AG04449 (cell line): ENCODE measurements at regions of chr7 and their contacts with region 1.

Region 1: DNA sequence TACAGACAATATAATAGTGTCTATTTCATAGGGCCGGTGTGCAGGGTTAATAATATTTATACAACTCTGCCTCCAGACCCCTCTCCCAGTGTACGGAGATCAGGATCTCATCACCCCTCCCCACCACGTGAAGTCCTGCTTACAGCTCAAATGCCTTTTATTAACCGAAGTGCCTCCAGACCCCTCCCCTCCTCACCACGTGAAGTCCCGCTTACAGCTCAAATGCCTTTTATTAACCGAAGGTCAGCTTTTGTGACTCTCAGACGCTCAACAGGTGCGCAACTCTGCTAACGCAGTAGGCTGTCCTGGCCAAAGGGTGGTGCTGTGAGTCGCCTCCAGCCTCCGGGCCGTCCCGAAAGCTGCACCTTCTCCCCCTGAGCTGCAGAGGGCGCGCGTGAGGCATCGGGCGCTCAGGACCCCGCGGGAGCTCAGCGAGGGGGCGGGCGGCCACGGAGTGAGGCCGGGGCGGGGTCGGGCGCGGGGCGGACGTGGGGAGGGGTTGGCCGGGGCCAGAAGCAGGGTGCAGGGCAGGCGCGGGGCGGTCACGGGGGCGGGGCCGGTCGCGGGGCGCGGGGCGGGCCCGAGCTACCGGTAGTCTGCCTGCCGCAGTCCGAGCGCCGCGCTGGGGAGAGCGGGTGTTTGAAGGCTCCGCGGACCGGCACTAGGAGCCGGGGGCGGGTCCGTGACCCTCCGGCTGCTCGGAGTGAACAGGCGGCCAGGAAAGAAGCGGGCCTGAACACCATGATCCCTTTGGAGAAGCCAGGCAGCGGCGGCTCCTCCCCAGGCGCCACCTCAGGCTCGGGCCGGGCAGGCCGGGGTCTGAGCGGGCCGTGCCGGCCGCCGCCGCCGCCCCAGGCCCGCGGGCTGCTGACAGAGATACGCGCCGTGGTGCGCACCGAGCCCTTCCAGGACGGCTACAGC is at the start of gene STK17A:
- DNase-seq: no peak
- H3K4me3 ChIP-seq: peak within 1 kb of the TSS; percentile 85
- CTCF ChIP-seq: peak; percentile 100

Region 2: DNA sequence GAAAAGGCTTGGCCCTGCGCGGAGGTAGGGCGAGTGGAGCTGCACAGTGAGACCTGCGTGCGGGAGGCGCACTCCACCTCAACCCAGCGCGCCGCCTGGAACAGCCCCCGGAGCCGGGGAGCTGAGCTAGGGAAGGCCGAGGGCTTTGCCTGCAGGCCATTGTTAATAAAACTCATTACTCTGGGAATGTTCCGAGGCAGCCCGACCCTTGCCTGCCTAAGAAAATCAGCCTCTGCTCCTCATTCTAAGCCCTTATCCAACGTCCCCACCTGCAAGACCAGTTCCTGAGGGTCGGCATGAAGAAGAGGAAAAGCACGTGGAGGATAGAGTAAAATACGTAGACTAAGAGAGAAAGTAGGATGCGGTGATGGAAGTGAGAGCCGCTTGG is 726.2 kb before region 1 on chr7:
- CTCF ChIA-PET with region 1: no interaction called
- POLR2A ChIA-PET with region 1: no interaction called
- DNase-seq: no peak
- H3K4me3 ChIP-seq: peak overlapping the region; percentile 58
- CTCF ChIP-seq: no peak

Region 3: DNA sequence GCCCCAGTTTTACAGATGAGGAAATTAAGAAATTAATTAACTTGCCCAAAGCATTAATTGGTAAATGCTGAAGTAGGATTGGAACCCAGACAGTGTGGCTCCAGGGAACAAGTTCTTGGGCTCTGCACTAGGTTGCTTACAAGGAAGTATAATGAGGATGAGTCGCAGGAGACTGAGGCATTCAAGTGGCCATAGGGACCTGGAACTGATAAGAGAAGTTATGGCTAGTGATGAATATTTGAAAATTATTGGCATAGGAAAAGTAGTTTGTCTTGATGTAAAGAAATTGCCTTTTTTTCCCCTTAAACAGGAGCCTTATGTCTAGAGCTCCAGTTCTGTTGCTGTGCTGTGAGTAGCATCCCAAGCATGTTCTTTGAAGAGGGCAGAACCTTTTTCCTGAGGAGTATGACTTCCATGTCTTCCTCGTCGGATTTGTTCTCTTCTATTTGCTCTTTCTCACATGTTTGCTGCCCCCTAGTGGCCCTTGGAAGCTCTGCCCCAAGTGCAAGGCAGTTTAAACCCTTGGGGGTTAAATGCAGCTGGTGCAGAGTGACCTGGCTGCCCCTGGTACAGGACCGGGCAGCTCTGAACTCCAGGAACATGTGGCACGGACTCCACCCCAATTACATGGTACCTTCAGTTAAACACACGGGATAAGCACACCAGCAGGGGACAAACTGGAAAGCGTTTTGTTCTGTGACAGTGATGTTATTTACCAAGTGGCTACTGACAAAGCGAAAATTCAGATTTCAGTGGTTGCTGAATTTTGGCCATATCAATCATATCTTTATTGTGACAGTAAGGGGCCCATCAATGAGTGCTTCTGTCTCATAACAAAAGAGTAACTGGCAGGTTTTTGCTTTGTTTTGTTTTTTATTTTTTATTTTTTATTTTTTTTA is 321.5 kb before region 1 on chr7:
- CTCF ChIA-PET with region 1: no interaction called
- POLR2A ChIA-PET with region 1: no interaction called
- DNase-seq: peak; percentile 53
- H3K4me3 ChIP-seq: no peak overlapping the region
- CTCF ChIP-seq: peak; percentile 79

Region 4: DNA sequence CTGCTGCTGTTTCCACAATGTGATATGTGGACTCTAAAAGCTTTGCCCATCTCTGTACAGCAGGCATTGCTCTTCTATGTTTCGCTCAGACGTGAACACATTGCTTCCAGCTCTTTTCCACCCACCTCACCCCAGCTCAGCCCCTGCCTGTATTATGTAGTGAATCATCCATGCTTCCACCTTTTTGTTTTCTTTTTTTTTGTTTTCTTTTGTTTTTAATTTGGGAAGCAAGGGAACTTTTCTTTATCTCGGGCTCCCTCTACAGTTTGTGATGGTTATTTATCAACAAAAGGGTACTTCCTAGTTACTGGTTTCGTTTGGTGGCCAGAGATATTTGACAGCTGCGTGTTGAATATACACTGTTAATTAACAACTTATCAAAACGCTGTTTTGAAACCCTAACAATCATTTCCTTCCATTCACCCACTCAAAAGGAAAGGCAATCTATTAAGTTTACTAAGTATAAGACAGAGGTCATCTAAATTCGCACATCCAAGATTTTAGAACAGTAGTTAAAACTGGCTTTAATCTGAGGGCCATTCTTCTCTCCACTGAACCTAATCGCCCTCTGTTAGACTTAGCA is 127.7 kb before region 1 on chr7:
- CTCF ChIA-PET with region 1: interaction called, 10 read pairs
- POLR2A ChIA-PET with region 1: interaction called, 3 read pairs
- DNase-seq: peak; percentile 3
- H3K4me3 ChIP-seq: no peak overlapping the region
- CTCF ChIP-seq: peak; percentile 29

Region 5: GRCh38 chr7:43479042-43479441 is 103.7 kb before region 1 on chr7:
- CTCF ChIA-PET with region 1: no interaction called
- POLR2A ChIA-PET with region 1: no interaction called
- DNase-seq: no peak
- H3K4me3 ChIP-seq: no peak overlapping the region
- CTCF ChIP-seq: no peak

Region 6: DNA sequence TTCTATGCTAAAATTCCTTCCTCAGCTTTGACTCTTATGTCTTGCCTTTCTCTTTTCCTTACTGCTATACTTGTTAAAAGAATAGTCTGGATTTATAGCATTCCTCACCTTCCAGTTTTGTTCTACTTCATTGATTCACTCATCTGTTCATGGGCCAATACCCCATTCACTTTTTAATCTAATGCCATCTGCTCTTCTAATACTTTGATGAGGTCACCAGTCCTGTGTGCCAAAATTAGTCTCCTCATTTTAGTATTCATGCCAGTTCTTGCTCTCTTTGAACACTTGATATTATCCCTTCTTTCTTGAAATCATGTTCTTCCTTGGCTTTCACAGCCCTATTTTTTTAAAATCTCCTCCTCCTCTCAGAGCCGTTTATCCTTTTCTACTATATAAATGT is 19.5 kb after region 1 on chr7:
- CTCF ChIA-PET with region 1: interaction called, 12 read pairs
- POLR2A ChIA-PET with region 1: interaction called, 5 read pairs
- DNase-seq: no peak
- H3K4me3 ChIP-seq: no peak overlapping the region
- CTCF ChIP-seq: no peak

Region 7: GRCh38 chr7:43631559-43631958 is 48.8 kb after region 1 on chr7:
- CTCF ChIA-PET with region 1: interaction called, 10 read pairs
- POLR2A ChIA-PET with region 1: interaction called, 3 read pairs
- DNase-seq: no peak
- H3K4me3 ChIP-seq: no peak overlapping the region
- CTCF ChIP-seq: no peak

Region 8: GRCh38 chr7:43666938-43667337 is 84.2 kb after region 1 on chr7:
- CTCF ChIA-PET with region 1: interaction called, 23 read pairs
- POLR2A ChIA-PET with region 1: interaction called, 3 read pairs
- DNase-seq: no peak
- H3K4me3 ChIP-seq: no peak overlapping the region
- CTCF ChIP-seq: no peak

Region 9: DNA sequence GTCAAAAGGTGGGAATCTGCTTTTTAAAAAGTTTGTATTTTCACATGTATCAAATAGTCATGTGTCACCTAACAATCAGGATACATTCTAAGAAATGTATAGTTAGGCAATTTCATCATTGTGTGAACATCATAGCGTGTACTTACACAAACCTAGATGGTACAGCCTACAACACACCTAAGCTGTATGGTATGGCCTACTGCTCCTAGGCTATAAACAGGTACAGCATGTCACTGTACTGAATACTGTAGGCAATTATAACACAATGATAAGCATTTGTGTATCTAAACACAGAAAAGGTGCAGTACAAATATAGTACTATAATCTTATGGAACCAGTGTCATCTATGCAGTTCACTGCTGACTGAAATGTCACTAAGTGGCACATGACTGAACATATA is 128.7 kb after region 1 on chr7:
- CTCF ChIA-PET with region 1: interaction called, 198 read pairs
- POLR2A ChIA-PET with region 1: no interaction called
- DNase-seq: no peak
- H3K4me3 ChIP-seq: no peak overlapping the region
- CTCF ChIP-seq: no peak

Region 10: DNA sequence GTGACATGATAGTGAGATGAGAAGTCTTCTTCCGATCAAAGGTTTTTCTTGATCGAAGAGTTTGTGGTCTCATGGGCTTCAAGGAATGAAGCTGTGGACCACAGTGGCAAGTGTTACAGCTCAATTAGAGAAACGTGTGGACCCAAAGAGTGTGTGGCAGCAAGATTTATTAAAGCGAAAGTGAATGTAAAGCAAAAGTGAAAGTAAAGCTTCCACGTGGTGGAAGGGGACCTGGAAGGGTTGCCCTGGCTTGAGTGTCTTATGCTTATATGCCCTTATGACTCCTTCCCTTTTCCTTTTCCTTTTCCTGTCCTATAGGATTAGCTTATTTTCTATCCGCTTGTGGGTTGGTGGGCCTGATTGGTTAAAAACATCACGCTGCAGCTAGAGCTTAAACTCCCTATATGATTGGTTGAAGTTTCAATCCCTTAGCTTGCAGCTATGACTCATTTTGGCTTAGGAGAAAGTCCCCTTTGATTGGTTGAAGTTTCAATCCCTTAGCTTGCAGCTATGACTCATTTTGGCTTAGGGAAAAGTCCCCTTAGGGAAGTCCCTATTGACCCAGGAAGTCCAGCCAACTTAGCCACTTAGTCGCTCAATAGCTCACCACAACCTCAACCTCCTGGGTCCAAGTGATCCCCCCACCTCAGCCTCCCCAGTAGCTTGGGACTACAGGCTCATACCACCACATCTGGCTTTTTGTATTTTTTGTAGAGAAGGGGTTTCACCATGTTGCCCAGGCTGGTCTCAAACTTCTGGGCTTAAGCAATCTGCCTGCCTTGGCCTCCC is 251.9 kb after region 1 on chr7:
- CTCF ChIA-PET with region 1: interaction called, 73 read pairs
- POLR2A ChIA-PET with region 1: no interaction called
- DNase-seq: no peak
- H3K4me3 ChIP-seq: no peak overlapping the region
- CTCF ChIP-seq: no peak